ENCODE measurements at regions of chr1 and their contacts with region 1.

Region 1: DNA sequence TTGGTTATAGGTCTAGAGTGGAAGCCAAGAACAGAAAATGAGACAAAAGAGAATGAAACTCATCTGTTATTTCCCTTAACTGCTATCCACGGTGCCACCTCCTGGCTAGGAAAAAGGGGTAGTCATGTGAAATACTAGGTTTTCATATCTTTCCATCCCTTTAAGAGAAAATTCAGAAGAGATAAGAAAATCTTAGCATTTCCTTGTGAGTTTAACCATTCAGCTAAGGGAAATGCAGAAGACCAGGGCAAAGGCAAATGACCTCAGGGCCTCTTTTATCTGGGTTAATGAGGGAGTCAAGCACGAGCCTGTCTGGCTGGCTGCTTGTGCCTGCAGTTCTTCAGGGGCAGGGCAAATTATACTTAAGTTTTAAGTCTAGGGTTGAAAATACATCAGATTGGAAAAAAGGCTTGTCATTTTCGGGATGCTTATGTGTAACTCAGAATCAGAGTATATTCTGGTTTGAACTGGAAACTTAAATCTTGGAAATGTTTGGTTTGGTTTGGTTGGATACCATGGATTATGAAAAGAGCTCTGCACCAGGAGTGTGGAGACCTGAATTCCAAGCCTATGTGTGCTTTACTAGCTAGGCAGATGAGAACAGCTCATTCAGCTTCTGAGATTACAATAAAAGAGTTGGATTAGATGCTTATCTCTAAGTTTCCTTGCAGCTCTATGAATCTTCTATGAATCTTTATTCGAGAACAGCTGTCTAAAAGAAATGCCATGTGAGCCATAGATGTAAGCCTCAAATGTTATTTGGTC is 19.9 kb downstream of the NIBAN1 start:
- DNase-seq: no peak
- ATAC-seq: no peak
- H3K4me3 ChIP-seq: no peak overlapping the region
- H3K27ac ChIP-seq: peak overlapping the region; percentile 6
- H3K4me1 ChIP-seq: peaks cover 15% of the 10 kb centered on the region
- H3K27me3 ChIP-seq: no peaks in the 10 kb centered on the region
- CTCF ChIP-seq: no peak

Region 2: GRCh38 chr1:184905474-184905894 is 48.9 kb before region 1 on chr1:
- intact Hi-C with region 1: loop called in 1 of 2 experiments (anchors 5 kb)
- DNase-seq: no peak
- ATAC-seq: no peak
- H3K4me3 ChIP-seq: no peak overlapping the region
- H3K27ac ChIP-seq: no peak overlapping the region
- H3K4me1 ChIP-seq: peaks cover 43% of the 10 kb centered on the region
- H3K27me3 ChIP-seq: no peaks in the 10 kb centered on the region
- CTCF ChIP-seq: no peak

Region 3: GRCh38 chr1:184973272-184974055 is 19.1 kb after region 1 on chr1:
- intact Hi-C with region 1: no loop called
- DNase-seq: peak; percentile 41 to 70
- ATAC-seq: peak; percentile 61 to 85 (median 78)
- H3K4me3 ChIP-seq: peak overlapping the region; percentile 80
- H3K27ac ChIP-seq: peak overlapping the region; percentile 89
- H3K4me1 ChIP-seq: peaks cover 20% of the 10 kb centered on the region
- H3K27me3 ChIP-seq: no peaks in the 10 kb centered on the region
- CTCF ChIP-seq: no peak

Region 4: DNA sequence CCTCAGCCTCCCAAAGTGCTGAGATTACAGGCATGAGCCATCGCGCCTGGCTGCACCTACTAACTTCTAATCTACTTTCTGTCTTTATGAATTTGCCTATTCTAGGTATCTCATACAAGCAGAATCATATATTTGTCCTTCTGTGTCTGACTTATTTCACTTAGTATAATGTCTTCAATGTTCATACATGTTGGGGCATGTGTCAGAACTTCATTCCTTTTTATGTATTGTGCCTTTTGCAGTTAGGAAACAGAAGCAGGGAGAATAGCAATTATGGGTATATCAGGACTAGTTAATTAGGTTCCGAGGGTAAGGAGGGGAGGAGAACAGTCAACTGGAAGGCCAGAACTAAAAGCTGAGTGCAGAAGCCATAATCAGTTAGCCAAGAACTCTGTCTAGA is 37.9 kb after region 1 on chr1:
- intact Hi-C with region 1: loop called in 1 of 2 experiments (anchors 2 kb)
- DNase-seq: no peak
- ATAC-seq: no peak
- H3K4me3 ChIP-seq: no peak overlapping the region
- H3K27ac ChIP-seq: no peak overlapping the region
- H3K4me1 ChIP-seq: peaks cover 5% of the 10 kb centered on the region
- H3K27me3 ChIP-seq: no peaks in the 10 kb centered on the region
- CTCF ChIP-seq: no peak